ENCODE measurements at regions of chr10 and their contacts with region 1.

Region 1: GRCh38 chr10:35635576-35635975 is 6.5 kb downstream of the FZD8 start:
- DNase-seq: peak; percentile 17 to 37
- H3K4me3 ChIP-seq: no peak overlapping the region
- H3K27ac ChIP-seq: no peak overlapping the region
- H3K4me1 ChIP-seq: no peaks in the 10 kb centered on the region
- H3K27me3 ChIP-seq: no peaks in the 10 kb centered on the region
- CTCF ChIP-seq: peak; percentile 87 to 91 (median 88)
- POLR2A ChIP-seq: no peak

Region 2: DNA sequence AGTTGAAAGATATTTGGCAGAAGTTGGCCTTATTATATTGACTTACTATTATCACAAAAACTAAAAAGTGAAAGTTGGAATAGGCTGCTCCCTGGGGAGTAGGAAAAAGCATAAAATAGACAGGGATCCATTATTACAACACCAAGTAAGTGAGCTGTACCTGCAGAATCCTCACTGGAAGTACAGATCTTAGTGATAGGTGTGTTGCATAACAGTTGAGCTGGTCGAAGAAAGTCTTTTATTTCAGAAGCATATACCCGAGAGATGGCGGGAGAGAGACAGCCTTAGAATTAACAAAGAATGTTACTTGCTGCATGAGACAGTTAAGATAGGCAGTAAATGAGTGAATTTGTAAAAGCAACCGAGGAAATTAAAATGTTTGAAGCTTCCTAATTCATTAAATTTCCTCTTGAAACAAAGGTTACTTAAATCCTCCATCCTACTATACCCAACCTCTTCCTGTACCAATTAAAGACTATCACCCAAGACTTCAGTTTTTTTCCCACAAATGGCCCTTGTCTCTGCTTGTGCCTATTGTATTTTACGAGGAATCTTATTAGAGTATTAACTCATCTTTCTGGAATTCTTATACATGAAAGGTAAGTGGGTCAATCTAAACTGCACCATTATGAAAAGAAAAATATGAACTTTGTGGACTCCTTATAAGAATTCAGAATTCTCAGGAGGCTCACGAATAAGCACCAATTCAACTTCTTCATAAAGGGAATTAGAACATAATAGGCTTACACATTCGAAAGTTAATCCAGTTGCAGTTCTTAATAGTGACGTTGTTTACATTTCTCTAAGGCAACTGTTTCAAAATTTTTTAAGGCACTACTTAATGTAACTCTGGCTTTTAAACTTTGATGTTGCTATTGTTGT is 452.7 kb before region 1 on chr10:
- intact Hi-C with region 1: no loop called
- DNase-seq: no peak
- H3K4me3 ChIP-seq: no peak overlapping the region
- H3K27ac ChIP-seq: no peak overlapping the region
- H3K4me1 ChIP-seq: no peaks in the 10 kb centered on the region
- H3K27me3 ChIP-seq: no peaks in the 10 kb centered on the region
- CTCF ChIP-seq: no peak
- POLR2A ChIP-seq: no peak

Region 3: DNA sequence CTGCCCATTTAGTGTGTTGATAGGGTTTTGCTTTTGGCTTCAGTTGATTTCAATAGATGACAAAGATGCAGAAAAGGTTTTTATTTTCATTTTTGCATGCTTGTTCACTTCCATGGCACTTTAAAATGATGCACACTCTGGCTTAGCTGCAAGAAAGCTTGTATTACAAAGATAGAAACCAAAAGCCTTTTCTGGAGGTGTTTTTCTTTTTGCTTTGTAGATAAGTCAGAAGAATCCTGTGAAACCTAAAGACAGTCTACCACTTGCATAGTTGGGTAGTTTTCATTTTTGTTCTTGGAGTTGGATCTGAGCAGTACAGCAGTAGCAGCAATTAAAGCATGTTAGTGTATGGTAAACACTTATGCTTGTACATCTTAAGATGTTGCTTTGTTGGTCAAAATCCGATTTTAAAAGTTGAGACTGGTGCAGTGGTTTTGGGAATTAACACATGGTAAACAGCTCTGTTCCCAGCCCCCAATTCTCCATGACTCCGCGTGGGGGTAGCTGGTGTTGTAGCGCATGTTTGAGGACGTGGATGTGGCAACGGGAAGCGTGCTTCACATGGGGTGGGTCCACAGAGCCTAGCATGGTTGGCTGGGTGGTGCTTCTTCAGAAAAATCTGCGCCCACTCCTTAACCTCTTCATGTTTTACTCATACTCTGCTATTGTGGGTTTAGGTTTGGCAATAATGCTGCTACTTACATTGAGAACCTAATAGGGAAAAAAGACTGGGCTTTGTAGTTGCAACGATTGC is 279.4 kb before region 1 on chr10:
- intact Hi-C with region 1: no loop called
- DNase-seq: no peak
- H3K4me3 ChIP-seq: no peak overlapping the region
- H3K27ac ChIP-seq: peak overlapping the region in 1 of 2 donors; percentile 37
- H3K4me1 ChIP-seq: no peaks in the 10 kb centered on the region
- H3K27me3 ChIP-seq: no peaks in the 10 kb centered on the region
- CTCF ChIP-seq: no peak
- POLR2A ChIP-seq: no peak

Region 4: GRCh38 chr10:36789974-36790373 is 1154.4 kb after region 1 on chr10:
- intact Hi-C with region 1: loop called (anchors 10 kb)
- DNase-seq: no peak
- H3K4me3 ChIP-seq: no peak overlapping the region
- H3K27ac ChIP-seq: no peak overlapping the region
- H3K4me1 ChIP-seq: no peaks in the 10 kb centered on the region
- H3K27me3 ChIP-seq: no peaks in the 10 kb centered on the region
- CTCF ChIP-seq: no peak
- POLR2A ChIP-seq: no peak